Activated CD8-positive, alpha-beta T cell treated with anti-CD3 and anti-CD28 coated beads, Interleukin-2, amount 10 ng/mL, durations not matched to agents 7 days and 5 days (primary cell): ENCODE measurements at regions of chr12 and their contacts with region 1.

Region 1: DNA sequence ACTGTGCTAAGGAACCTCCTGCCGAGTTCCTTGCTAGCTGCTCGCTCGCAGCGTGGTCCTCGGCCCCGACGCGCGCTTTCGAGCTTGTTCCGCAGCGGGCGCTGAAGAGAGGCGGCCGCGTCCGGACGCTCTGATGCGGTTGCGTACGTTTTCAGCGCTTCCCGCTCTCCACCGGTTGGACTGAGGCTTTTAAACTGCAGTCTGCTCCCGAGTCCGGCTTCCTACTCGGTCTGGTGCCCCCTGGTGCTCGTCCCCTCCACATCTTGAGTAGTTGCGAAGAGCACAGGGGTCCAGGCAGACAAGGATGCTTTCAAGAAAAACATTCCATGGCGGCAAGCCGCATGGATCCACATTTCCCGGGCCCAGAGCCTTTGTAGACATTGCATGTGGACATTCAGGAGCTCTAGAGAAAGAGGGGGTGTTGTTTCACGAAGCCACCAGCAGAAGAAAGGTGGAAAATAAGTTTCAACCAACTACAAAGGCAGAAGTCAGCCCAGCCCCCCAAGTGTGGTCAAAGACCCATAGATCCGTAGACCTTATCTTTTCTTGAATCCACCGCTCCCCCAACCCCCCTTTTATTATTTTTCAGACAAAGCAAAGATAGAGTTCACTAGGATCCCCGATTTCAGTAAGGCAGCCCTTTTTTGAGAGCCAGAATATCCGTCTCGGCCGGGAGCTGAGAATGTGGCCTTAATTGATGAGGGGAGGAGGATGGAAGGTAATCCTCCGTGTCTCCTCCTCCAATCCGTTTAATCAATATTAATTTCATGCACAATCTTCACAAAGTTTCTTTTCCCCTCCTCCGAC is 984 bp upstream of the WNK1 start:
- DNase-seq: peak; percentile 96
- ATAC-seq: peak; percentile 57
- H3K4me3 Mint-ChIP-seq: no peak overlapping the region
- H3K27ac Mint-ChIP-seq: no peak overlapping the region
- H3K4me1 Mint-ChIP-seq: peaks cover 24% of the 10 kb centered on the region
- H3K27me3 Mint-ChIP-seq: no peaks in the 10 kb centered on the region

Region 2: DNA sequence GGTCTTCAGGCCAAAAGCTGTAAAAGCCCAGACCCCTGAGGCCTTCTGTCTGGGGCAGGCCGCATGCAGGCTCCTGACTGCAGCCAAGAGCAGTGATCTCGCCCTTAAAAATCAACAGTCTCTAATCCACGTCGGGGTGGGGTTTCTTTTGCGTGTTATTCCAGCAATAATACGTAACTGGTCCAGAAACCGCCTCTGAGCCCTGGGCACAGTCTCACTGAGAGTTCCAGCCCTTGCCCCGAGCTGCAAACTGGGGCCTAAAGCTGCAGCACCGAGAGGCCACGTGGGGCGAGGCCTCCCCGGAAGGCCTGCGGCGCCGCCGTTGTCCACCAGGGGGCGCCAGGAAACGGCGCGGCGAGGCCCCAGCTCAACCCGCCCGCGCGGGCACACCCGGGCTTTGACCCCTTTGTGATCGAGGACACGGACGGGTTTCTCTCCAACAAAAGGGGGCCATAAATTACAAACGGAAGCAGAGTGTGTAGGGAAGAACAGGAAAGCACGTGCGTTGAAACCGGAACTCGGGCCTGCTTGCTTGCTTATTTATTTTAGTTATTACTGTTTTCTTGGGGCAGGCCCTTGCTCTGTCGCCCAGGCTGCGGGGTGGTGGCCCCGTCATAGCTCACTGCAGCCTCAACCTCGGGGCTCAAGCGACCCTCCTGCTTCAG is 175.3 kb before region 1 on chr12:
- CTCF ChIA-PET with region 1: interaction called, 90 read pairs
- POLR2A ChIA-PET with region 1: interaction called, 36 read pairs
- DNase-seq: peak; percentile 88
- ATAC-seq: peak; percentile 98
- H3K4me3 Mint-ChIP-seq: no peak overlapping the region
- H3K27ac Mint-ChIP-seq: peak overlapping the region; percentile 85
- H3K4me1 Mint-ChIP-seq: peaks cover 40% of the 10 kb centered on the region
- H3K27me3 Mint-ChIP-seq: peaks cover 5% of the 10 kb centered on the region

Region 3: GRCh38 chr12:630656-631632 is 120.5 kb before region 1 on chr12:
- CTCF ChIA-PET with region 1: interaction called, 28 read pairs
- POLR2A ChIA-PET with region 1: interaction called, 31 read pairs
- DNase-seq: peak; percentile 81
- ATAC-seq: peak; percentile 97
- H3K4me3 Mint-ChIP-seq: peak overlapping the region; percentile 83
- H3K27ac Mint-ChIP-seq: peak overlapping the region; percentile 93
- H3K4me1 Mint-ChIP-seq: peaks cover 43% of the 10 kb centered on the region
- H3K27me3 Mint-ChIP-seq: no peaks in the 10 kb centered on the region

Region 4: DNA sequence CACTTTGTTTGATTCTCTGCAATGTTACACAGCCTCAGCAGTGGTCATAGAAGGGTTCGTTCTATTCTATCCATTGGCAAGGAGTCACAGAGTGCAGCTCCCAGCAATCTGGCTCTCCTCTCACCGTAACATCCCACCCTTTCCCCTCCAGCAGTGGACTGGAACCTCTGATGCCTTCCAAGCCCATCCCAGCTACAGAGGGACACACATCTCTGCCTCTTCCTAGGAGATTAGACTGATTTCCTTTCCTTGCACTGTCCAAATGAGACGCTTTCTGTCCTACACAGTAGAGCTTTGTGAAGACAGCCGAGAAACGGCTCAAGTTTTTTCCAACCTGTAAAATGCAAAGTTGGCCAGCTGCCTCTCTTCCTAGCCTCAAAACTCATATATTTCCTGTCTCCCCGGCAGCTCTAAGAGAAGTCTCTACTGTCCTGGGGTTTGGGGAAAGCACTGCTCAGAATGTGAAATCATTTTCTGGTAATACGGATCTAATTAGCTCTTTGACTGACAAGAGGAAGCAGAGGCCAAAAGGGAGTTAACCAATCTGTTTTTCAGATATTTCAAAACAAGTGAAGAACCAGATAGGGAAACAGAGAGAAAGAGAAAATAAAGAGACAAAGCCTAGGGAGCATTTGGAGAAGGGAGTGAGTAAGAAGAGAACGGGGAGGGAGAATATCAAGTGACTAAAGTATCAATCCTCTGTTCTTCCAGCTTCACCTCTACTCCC is 88.7 kb before region 1 on chr12:
- CTCF ChIA-PET with region 1: interaction called, 58 read pairs
- POLR2A ChIA-PET with region 1: interaction called, 14 read pairs
- DNase-seq: no peak
- ATAC-seq: peak; percentile 11
- H3K4me3 Mint-ChIP-seq: peak overlapping the region; percentile 52
- H3K27ac Mint-ChIP-seq: peak overlapping the region; percentile 78
- H3K4me1 Mint-ChIP-seq: peaks cover 39% of the 10 kb centered on the region
- H3K27me3 Mint-ChIP-seq: no peaks in the 10 kb centered on the region

Region 5: GRCh38 chr12:685388-685787 is 66.0 kb before region 1 on chr12:
- CTCF ChIA-PET with region 1: interaction called, 59 read pairs
- POLR2A ChIA-PET with region 1: interaction called, 26 read pairs
- DNase-seq: peak; percentile 93
- ATAC-seq: peak; percentile 96
- H3K4me3 Mint-ChIP-seq: peak overlapping the region; percentile 48
- H3K27ac Mint-ChIP-seq: peak overlapping the region; percentile 94
- H3K4me1 Mint-ChIP-seq: peaks cover 37% of the 10 kb centered on the region
- H3K27me3 Mint-ChIP-seq: no peaks in the 10 kb centered on the region

Region 6: DNA sequence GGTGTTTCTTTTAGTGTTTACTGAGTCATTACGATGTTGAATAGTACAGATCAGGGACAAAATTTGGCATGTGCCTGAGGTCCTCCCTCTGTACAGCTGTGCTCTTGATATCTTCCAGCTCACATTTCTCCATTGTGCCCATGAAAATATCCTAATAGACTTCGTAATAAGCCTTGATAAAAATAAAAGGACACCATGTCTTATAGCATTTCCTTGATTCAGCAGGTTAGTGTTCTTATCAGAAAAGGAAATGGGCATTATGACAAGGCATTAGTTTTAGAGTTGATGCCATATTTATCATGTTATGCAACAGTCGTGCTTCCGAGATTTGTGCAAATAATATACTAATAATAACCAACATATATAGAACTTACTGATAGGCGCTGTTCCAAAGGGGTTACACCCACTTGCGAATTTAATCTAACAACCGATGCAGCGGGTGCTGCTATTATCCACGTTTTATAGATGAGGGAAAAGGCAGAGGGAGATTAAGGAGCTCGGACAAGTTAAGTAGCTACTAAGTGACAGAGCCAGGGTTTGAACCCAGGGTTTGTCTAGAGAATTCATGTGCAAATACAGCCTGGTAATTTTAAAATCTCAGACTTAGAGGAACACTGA is 14.2 kb before region 1 on chr12:
- CTCF ChIA-PET with region 1: interaction called, 123 read pairs
- POLR2A ChIA-PET with region 1: interaction called, 9 read pairs
- DNase-seq: no peak
- ATAC-seq: no peak
- H3K4me3 Mint-ChIP-seq: no peak overlapping the region
- H3K27ac Mint-ChIP-seq: no peak overlapping the region
- H3K4me1 Mint-ChIP-seq: peaks cover 8% of the 10 kb centered on the region
- H3K27me3 Mint-ChIP-seq: no peaks in the 10 kb centered on the region

Region 7: GRCh38 chr12:818733-819132 is 67.3 kb after region 1 on chr12:
- CTCF ChIA-PET with region 1: interaction called, 79 read pairs
- POLR2A ChIA-PET with region 1: interaction called, 3 read pairs
- DNase-seq: no peak
- ATAC-seq: no peak
- H3K4me3 Mint-ChIP-seq: no peak overlapping the region
- H3K27ac Mint-ChIP-seq: no peak overlapping the region
- H3K4me1 Mint-ChIP-seq: peaks cover 47% of the 10 kb centered on the region
- H3K27me3 Mint-ChIP-seq: no peaks in the 10 kb centered on the region

Region 8: DNA sequence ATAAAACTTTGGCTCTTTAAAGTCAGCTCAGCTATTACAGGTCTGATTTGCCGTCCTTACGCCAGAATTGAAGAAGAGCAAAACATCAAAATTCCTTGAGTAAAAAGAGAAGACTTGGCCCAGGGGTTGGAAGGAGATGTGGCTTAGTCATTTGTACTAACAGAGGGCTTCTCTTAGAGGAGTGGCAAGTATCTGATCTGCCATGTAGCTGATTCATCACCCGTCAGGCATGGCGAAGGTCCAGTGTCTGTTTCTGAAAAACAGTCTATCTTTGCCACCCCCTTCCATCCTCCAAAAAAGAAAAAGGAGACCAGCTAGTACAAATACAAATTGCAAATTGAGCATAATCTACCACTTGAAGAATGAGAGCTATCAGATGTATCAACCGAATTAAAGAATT is 106.2 kb after region 1 on chr12:
- CTCF ChIA-PET with region 1: no interaction called
- POLR2A ChIA-PET with region 1: no interaction called
- DNase-seq: no peak
- ATAC-seq: no peak
- H3K4me3 Mint-ChIP-seq: no peak overlapping the region
- H3K27ac Mint-ChIP-seq: peak overlapping the region; percentile 0
- H3K4me1 Mint-ChIP-seq: peaks cover 15% of the 10 kb centered on the region
- H3K27me3 Mint-ChIP-seq: no peaks in the 10 kb centered on the region